ENCODE measurements at regions of chr3 and their contacts with region 1.

Region 1: DNA sequence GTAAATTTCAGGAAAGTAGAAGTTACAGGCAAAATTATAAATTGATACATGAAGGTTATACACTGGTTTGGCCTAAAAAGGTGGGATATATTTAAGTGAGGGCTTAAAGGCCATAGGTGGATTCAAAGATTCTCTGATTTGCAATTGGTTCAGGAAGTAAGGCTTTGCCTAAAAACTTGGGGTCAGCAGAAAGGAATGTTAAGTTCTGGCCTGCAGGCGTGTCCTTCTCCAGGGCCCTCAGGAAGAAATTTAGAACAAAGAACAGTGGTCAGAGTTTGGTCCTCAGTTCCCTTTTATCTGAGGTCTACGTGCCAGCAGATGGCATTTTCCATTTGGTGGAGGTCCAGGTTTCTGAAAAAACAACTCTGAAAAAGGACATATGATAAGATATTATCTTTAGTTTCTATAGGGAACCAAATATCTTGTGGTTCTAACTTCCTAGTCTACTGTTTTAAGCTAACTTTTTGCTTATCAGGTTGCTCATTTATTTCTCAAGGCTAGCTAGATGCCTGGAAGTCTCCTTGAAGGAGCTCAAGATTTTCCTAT is 40.5 kb downstream of the SCN11A start:
- DNase-seq: no peak
- H3K4me3 Mint-ChIP-seq: no peak overlapping the region
- H3K27ac Mint-ChIP-seq: no peak overlapping the region
- H3K4me1 Mint-ChIP-seq: no peaks in the 10 kb centered on the region
- H3K27me3 Mint-ChIP-seq: peaks cover 30% of the 10 kb centered on the region

Region 2: DNA sequence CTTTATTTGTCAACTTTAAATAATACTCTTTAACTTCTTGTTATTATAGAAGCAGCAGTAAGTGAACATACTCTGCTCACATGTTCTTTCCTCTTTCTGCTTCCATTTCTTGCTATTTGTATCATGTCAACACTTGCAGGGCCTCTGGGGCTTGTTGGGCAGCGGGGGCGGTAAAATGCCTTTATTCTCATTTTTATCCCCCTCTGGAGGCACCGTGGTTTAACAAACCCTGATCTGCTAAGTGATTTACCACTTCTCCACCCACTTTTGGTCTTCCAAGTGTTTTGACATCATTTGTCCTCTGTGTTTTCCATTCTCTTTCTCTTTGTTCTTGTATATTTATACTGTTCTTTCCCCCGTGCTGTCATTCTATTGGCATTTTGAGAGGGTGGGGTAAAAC is 229.1 kb before region 1 on chr3:
- CTCF ChIA-PET with region 1: no interaction called
- DNase-seq: no peak
- H3K4me3 Mint-ChIP-seq: no peak overlapping the region
- H3K27ac Mint-ChIP-seq: no peak overlapping the region
- H3K4me1 Mint-ChIP-seq: no peaks in the 10 kb centered on the region
- H3K27me3 Mint-ChIP-seq: peaks cover 4% of the 10 kb centered on the region

Region 3: DNA sequence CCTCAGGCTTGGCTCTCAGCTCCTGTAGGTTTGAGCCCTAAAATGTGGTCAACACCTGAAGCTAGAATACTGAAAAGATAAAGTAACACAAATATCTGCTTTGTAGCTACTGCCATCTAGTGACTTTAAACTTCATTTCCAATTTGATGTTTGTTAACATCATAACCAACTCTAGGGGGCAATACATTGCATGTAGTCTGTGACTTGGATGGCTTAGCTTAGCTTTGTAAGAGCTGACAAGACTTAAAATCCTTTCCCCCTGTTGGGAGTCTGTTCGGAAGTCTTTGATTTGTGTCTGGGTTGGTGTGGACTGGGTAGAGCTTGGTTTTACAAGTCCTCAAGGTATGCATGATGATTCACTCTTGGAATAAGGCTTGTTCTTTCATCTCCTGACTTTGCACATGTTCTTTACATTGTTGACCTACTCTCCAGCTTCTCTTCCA is 11.2 kb before region 1 on chr3:
- CTCF ChIA-PET with region 1: interaction called, 19 read pairs
- DNase-seq: no peak
- H3K4me3 Mint-ChIP-seq: no peak overlapping the region
- H3K27ac Mint-ChIP-seq: no peak overlapping the region
- H3K4me1 Mint-ChIP-seq: no peaks in the 10 kb centered on the region
- H3K27me3 Mint-ChIP-seq: peaks cover 7% of the 10 kb centered on the region